Mammary epithelial cell (primary cell): ENCODE measurements at regions of chr11 and their contacts with region 1.

Region 1: DNA sequence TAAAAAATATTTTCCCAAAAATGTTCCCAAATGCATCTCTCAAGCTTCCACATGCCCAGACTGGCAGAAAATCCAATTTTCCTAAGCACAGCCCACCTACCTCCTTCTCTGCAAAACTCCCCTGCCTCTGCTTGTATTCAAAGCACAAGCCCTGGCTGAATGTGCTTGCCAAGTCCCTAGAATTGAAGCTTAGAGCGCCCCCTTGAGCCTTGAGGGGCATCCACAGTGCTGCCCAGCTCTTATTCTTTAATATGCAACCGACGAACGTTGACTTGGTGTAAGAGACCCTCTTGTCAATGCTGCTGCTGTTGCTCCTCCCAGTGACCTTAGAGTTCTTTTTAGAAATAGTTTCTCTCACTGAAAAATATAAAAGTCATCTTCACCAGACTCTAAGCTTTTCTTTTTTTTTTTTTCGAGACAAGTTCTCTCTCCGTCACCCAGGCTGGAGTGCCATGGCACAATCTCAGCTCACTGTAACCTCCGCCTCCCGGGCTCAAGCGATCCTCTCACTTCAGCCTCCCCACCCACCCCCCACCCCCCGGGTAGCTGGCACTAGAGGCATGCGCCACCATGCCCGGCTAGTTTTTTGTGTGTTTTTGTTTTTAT is 63.5 kb upstream of the CAPRIN1 start:
- DNase-seq: peak; percentile 48
- H3K4me3 ChIP-seq: no peak overlapping the region
- H3K27ac ChIP-seq: no peak overlapping the region
- H3K4me1 ChIP-seq: no peaks in the 10 kb centered on the region
- H3K27me3 ChIP-seq: no peaks in the 10 kb centered on the region
- CTCF ChIP-seq: peak; percentile 82 to 89

Region 2: GRCh38 chr11:33742249-33742851 is 245.7 kb before region 1 on chr11:
- CTCF ChIA-PET with region 1: interaction called, 23 read pairs
- dilution Hi-C with region 1: no loop called
- in situ Hi-C with region 1: no loop called
- intact Hi-C with region 1: no loop called
- DNase-seq: no peak
- H3K4me3 ChIP-seq: no peak overlapping the region
- H3K27ac ChIP-seq: no peak overlapping the region
- H3K4me1 ChIP-seq: peaks cover 6% of the 10 kb centered on the region
- H3K27me3 ChIP-seq: no peaks in the 10 kb centered on the region
- CTCF ChIP-seq: peak; percentile 41 to 50

Region 3: DNA sequence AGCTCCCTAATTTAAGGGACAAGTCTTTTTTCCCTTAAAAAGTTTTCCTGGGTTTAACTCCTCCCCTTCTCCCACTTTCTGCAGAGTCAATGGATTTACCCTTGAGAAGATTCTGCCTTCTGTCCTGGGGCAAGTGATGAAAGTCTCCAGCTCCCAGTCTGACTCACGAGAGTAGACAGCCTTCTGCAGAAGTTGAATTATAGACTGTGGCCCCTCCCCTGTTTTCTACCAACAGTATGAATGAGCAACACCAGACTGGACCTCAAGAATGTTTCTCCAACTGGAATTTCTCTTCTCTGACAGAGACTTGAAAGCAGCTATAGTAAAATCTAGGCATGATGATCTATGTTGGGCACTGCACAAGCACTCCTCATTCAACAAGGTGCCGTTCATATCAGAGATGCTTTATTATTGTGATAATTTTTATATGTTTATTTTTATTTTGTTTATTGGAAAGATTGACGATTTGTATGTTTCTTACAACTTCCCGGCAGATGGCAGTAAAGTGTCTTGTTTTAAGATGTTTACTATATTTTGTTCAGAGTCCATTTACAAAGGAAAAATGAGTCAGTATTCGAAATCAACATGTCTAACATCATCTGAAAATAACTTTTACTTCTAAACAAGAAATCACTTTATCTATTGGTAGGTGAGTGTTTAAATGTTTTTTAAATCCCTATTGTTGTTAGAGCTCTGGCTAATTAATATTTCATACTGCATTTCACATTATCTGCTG is 152.8 kb before region 1 on chr11:
- CTCF ChIA-PET with region 1: interaction called, 3 read pairs
- dilution Hi-C with region 1: no loop called
- in situ Hi-C with region 1: no loop called
- intact Hi-C with region 1: loop called (anchors 1 kb)
- DNase-seq: peak; percentile 76
- H3K4me3 ChIP-seq: no peak overlapping the region
- H3K27ac ChIP-seq: no peak overlapping the region
- H3K4me1 ChIP-seq: peaks cover 17% of the 10 kb centered on the region
- H3K27me3 ChIP-seq: no peaks in the 10 kb centered on the region
- CTCF ChIP-seq: peak; percentile 23 to 41

Region 4: DNA sequence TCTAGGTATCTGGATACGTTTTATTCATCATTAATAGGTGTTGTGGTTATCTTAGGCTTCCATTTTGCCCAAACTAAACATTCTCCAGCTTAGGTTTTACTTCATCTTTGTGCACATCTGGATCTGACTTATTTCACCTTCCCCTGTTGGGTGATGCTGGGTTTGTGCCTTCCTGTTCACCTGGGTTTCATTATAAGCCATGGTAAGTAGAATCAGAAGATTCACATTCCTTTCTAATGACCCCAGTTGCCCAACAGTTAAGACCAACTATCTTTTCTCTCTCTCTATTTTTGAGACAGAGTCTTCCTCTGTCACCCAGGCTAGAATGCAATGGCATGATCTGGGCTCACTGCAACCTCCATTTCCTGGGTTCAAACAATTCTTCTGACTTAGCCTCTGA is 140.8 kb before region 1 on chr11:
- CTCF ChIA-PET with region 1: no interaction called
- dilution Hi-C with region 1: no loop called
- in situ Hi-C with region 1: no loop called
- intact Hi-C with region 1: no loop called
- DNase-seq: no peak
- H3K4me3 ChIP-seq: no peak overlapping the region
- H3K27ac ChIP-seq: no peak overlapping the region
- H3K4me1 ChIP-seq: no peaks in the 10 kb centered on the region
- H3K27me3 ChIP-seq: no peaks in the 10 kb centered on the region
- CTCF ChIP-seq: no peak

Region 5: DNA sequence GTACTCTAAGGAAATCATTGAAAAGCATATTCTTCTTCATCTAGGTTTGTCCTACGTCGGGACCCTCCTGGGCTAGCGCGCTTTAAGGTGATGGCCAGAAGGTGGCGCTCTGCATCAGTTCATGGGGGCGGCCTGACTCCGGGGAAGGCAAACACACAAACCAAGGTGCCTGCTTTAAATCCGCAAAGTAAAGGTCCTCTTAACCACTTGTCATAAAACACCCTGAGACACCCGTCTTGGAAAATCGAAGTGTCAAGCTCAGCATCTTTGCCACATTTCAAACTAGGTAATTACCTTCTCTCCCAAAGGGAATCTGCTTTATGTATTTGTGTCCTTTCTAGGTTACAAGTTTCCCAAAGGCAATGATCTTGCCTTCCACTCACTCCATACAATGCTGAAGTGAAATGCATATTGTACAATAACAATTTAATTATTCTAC is 130.1 kb before region 1 on chr11:
- CTCF ChIA-PET with region 1: no interaction called
- dilution Hi-C with region 1: no loop called
- in situ Hi-C with region 1: no loop called
- intact Hi-C with region 1: loop called (anchors 1 kb)
- DNase-seq: peak; percentile 35
- H3K4me3 ChIP-seq: no peak overlapping the region
- H3K27ac ChIP-seq: no peak overlapping the region
- H3K4me1 ChIP-seq: no peaks in the 10 kb centered on the region
- H3K27me3 ChIP-seq: no peaks in the 10 kb centered on the region
- CTCF ChIP-seq: peak; percentile 69 to 97

Region 6: DNA sequence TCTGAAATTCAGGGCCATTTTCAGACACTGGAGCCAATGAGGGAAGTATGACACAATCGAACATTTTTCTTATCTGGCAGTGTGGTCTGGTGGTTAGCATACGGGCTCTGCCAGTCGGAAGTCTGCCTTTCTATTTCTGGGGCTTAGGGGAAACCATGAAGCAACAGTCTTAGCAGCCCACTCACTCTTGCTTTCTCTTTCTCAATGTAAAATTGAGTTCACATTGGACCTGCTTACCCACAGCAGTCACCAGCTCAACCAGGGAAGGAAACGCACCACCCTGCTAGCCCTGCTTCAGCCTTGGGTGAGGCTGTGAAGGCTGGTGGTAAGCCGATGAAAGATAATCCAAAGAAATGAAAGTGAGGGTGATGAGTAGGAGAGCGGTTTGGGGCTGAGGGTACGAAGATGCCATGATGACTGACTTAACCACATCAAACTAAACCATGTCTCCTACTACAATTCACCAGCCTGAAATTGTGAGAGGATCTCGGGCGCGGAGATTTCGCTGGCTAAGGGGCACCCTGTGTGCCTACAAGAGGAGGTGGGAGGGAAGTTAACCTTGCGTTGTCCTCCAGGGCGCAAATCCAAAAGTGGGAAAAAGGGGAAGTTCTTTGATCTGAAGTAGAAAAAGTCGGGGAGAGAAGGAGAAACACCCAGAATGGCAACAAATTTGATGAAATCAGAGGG is 94.2 kb before region 1 on chr11:
- CTCF ChIA-PET with region 1: no interaction called
- dilution Hi-C with region 1: loop called (anchors 5 kb)
- in situ Hi-C with region 1: no loop called
- intact Hi-C with region 1: no loop called
- DNase-seq: no peak
- H3K4me3 ChIP-seq: no peak overlapping the region
- H3K27ac ChIP-seq: no peak overlapping the region
- H3K4me1 ChIP-seq: peaks cover 21% of the 10 kb centered on the region
- H3K27me3 ChIP-seq: no peaks in the 10 kb centered on the region
- CTCF ChIP-seq: no peak

Region 7: GRCh38 chr11:33965032-33965431 is 23.0 kb before region 1 on chr11:
- CTCF ChIA-PET with region 1: no interaction called
- dilution Hi-C with region 1: no loop called
- in situ Hi-C with region 1: no loop called
- intact Hi-C with region 1: no loop called
- DNase-seq: no peak
- H3K4me3 ChIP-seq: no peak overlapping the region
- H3K27ac ChIP-seq: no peak overlapping the region
- H3K4me1 ChIP-seq: no peaks in the 10 kb centered on the region
- H3K27me3 ChIP-seq: no peaks in the 10 kb centered on the region
- CTCF ChIP-seq: no peak

Region 8: GRCh38 chr11:34174412-34175041 is 186.4 kb after region 1 on chr11:
- CTCF ChIA-PET with region 1: no interaction called
- dilution Hi-C with region 1: no loop called
- in situ Hi-C with region 1: no loop called
- intact Hi-C with region 1: no loop called
- DNase-seq: peak; percentile 61
- H3K4me3 ChIP-seq: peak overlapping the region; percentile 28 to 34 (median 29)
- H3K27ac ChIP-seq: no peak overlapping the region
- H3K4me1 ChIP-seq: peaks cover 12% of the 10 kb centered on the region
- H3K27me3 ChIP-seq: no peaks in the 10 kb centered on the region
- CTCF ChIP-seq: peak; percentile 85 to 99